GM18951 (cell line): ENCODE measurements at regions of chr10 and their contacts with region 1.

Region 1: GRCh38 chr10:73167783-73168464 is at the starts of genes ECD and FAM149B1:
- POLR2A ChIP-seq: peak; percentile 96

Region 2: GRCh38 chr10:72375585-72375984 is 792.3 kb before region 1 on chr10:
- in situ Hi-C with region 1: loop called (anchors 25 kb)
- POLR2A ChIP-seq: no peak